Stomach (tissue), 19 donors: ENCODE measurements at regions of chr2 and their contacts with region 1.

Region 1: GRCh38 chr2:112048887-112049286 is 6.2 kb upstream of the TMEM87B start:
- DNase-seq: peak in 1 of 2 donors; percentile 79
- H3K4me3 ChIP-seq: no peak overlapping the region
- H3K27ac ChIP-seq: no peak overlapping the region
- H3K4me1 ChIP-seq: peaks cover 11 to 34% (median 21%) of the 10 kb centered on the region in 4 donors
- H3K27me3 ChIP-seq: no peaks in the 10 kb centered on the region
- CTCF ChIP-seq: peak in 5 of 7 experiments; percentile 7 to 90 (median 82)
- EP300 ChIP-seq: no peak
- POLR2A ChIP-seq: no peak

Region 2: GRCh38 chr2:111897924-111898702 is 150.8 kb before region 1 on chr2 and contains the start of gene MERTK:
- intact Hi-C with region 1: loop called (anchors 5 kb)
- DNase-seq: peak; percentile 89 to 96
- H3K4me3 ChIP-seq: peak within 1 kb of the TSS; percentile 53 to 91 (median 77)
- H3K27ac ChIP-seq: peak within 1 kb of the TSS; percentile 83 to 89 (median 85)
- H3K4me1 ChIP-seq: peaks cover 0 to 63% (median 33%) of the 10 kb centered on the region in 4 donors
- H3K27me3 ChIP-seq: peaks cover 0 to 6% (median 0%) of the 10 kb centered on the region in 3 donors
- CTCF ChIP-seq: peak in 5 of 7 experiments; percentile 45 to 75 (median 56)
- EP300 ChIP-seq: no peak
- POLR2A ChIP-seq: peak in 1 of 4 donors; percentile 28
- total RNA-seq, gene MERTK: 6.1 to 21.8 (median 17.4) TPM

Region 3: GRCh38 chr2:112198780-112199179 is 149.9 kb after region 1 on chr2:
- intact Hi-C with region 1: no loop called
- DNase-seq: no peak
- H3K4me3 ChIP-seq: no peak overlapping the region
- H3K27ac ChIP-seq: no peak overlapping the region
- H3K4me1 ChIP-seq: no peaks in the 10 kb centered on the region
- H3K27me3 ChIP-seq: no peaks in the 10 kb centered on the region
- CTCF ChIP-seq: no peak
- EP300 ChIP-seq: no peak
- POLR2A ChIP-seq: no peak